AG04450 (cell line): ENCODE measurements at regions of chr15 and their contacts with region 1.

Region 1: GRCh38 chr15:33700695-33701304 is 267.5 kb upstream of the CHRM5 start:
- DNase-seq: peak; percentile 68
- H3K4me3 ChIP-seq: no peak overlapping the region
- H3K27ac ChIP-seq: no peak overlapping the region
- H3K27me3 ChIP-seq: peaks cover 8% of the 10 kb centered on the region
- CTCF ChIP-seq: peak; percentile 95

Region 2: GRCh38 chr15:33234014-33234461 is 466.8 kb before region 1 on chr15:
- CTCF ChIA-PET with region 1: interaction called, 23 read pairs
- POLR2A ChIA-PET with region 1: no interaction called
- DNase-seq: no peak
- H3K4me3 ChIP-seq: no peak overlapping the region
- H3K27ac ChIP-seq: no peak overlapping the region
- H3K27me3 ChIP-seq: peaks cover 9% of the 10 kb centered on the region
- CTCF ChIP-seq: peak; percentile 56

Region 3: GRCh38 chr15:33292717-33293307 is 408.0 kb before region 1 on chr15:
- CTCF ChIA-PET with region 1: interaction called, 92 read pairs
- POLR2A ChIA-PET with region 1: no interaction called
- DNase-seq: peak; percentile 10
- H3K4me3 ChIP-seq: no peak overlapping the region
- H3K27ac ChIP-seq: no peak overlapping the region
- H3K27me3 ChIP-seq: peaks cover 7% of the 10 kb centered on the region
- CTCF ChIP-seq: peak; percentile 70

Region 4: GRCh38 chr15:33679061-33679460 is 21.7 kb before region 1 on chr15:
- CTCF ChIA-PET with region 1: interaction called, 13 read pairs
- POLR2A ChIA-PET with region 1: no interaction called
- DNase-seq: no peak
- H3K4me3 ChIP-seq: no peak overlapping the region
- H3K27ac ChIP-seq: no peak overlapping the region
- H3K27me3 ChIP-seq: peaks cover 2% of the 10 kb centered on the region
- CTCF ChIP-seq: no peak

Region 5: GRCh38 chr15:33716025-33716424 is 15.2 kb after region 1 on chr15:
- CTCF ChIA-PET with region 1: interaction called, 16 read pairs
- POLR2A ChIA-PET with region 1: no interaction called
- DNase-seq: no peak
- H3K4me3 ChIP-seq: no peak overlapping the region
- H3K27ac ChIP-seq: no peak overlapping the region
- H3K27me3 ChIP-seq: no peaks in the 10 kb centered on the region
- CTCF ChIP-seq: no peak

Region 6: GRCh38 chr15:33722005-33722672 is 21.3 kb after region 1 on chr15:
- CTCF ChIA-PET with region 1: interaction called, 22 read pairs
- POLR2A ChIA-PET with region 1: no interaction called
- DNase-seq: no peak
- H3K4me3 ChIP-seq: no peak overlapping the region
- H3K27ac ChIP-seq: no peak overlapping the region
- H3K27me3 ChIP-seq: no peaks in the 10 kb centered on the region
- CTCF ChIP-seq: no peak

Region 7: DNA sequence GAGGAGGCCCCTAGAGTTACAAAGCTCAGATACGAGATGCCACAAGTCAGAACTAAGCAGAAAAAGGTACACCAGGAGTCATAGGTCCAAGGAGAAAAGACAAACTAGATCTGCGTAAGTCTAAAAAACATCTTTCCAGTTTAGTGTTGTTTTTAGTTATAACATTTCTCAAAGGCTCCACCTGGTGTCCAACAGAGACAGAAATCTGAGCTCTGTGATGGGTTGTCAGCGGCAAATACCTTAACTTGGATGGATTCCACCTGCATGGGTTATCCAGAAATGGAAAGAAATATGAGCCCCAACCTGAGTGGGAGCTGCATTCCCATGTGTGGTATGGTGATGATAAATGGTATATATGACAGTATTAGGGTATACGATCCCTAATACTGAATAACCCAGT is 28.9 kb after region 1 on chr15:
- CTCF ChIA-PET with region 1: interaction called, 22 read pairs
- POLR2A ChIA-PET with region 1: no interaction called
- DNase-seq: no peak
- H3K4me3 ChIP-seq: no peak overlapping the region
- H3K27ac ChIP-seq: no peak overlapping the region
- H3K27me3 ChIP-seq: no peaks in the 10 kb centered on the region
- CTCF ChIP-seq: peak; percentile 26; the same call in 1 of the 2 replicates

Region 8: DNA sequence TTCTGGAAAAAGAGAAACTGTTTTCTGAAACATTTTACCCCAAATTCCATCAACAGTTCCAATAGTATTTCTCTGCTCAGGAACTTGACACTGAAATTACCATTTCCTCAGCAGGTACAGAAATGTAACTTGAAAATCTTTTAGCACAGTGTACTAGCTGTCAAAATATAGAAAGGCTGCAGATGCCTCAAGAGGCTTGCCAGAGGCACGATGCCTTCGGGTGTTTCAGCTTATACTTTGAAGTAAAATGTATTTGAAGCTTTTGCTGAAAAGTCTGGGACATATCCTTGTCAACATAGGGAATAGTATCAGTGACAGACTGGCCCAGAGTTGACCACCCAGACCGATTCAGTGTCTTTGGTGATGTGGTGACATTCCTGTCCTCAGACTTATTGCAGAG is 113.1 kb after region 1 on chr15:
- CTCF ChIA-PET with region 1: no interaction called
- POLR2A ChIA-PET with region 1: no interaction called
- DNase-seq: no peak
- H3K4me3 ChIP-seq: no peak overlapping the region
- H3K27ac ChIP-seq: no peak overlapping the region
- H3K27me3 ChIP-seq: no peaks in the 10 kb centered on the region
- CTCF ChIP-seq: no peak